ENCODE measurements at regions of chr18 and their contacts with region 1.

Region 1: DNA sequence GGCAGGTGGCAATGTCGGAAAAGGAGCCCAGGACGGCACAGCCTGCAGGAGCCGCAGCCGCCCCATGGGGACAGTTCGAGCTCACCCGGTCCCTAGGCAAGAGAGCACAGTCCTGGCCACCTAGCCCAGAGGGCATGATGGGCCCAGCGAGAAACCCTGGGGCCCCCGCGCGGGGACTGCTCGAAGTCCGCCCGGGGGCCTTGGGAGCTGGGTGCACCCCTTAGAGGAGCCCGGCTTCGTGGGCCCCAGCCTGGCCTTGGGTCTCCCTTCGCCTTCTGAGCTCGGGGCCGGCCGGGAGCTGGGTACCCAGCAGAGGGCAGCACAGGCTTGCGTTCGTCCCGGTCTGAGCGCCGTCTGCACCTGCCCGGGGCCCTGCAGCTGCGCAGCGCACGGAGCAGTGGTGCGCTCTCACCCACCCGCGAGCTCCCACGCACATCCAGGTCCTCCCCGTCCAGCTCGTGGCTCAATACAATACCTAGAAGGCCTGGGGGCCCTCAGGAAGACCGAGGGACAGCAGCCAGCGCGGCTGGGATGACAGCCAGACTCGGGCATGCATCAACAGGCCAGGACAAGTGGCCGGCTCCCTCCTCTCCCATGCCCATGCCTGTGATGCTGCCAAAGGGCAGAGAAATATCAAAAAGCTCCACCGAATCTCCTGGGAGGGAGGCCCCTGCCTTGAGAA is 96.2 kb upstream of the ZNF532 start:
- DNase-seq: peak; percentile 53 to 73
- H3K4me3 ChIP-seq: no peak overlapping the region
- H3K4me3 Mint-ChIP-seq: peak overlapping the region; percentile 62
- H3K27ac Mint-ChIP-seq: no peak overlapping the region
- H3K4me1 ChIP-seq: no peaks in the 10 kb centered on the region
- H3K4me1 Mint-ChIP-seq: no peaks in the 10 kb centered on the region
- H3K27me3 ChIP-seq: no peaks in the 10 kb centered on the region
- H3K27me3 Mint-ChIP-seq: peaks cover 7% of the 10 kb centered on the region
- CTCF ChIP-seq: peak; percentile 35 to 71

Region 2: GRCh38 chr18:58400337-58400870 is 368.0 kb before region 1 on chr18:
- CTCF ChIA-PET with region 1: no interaction called
- POLR2A ChIA-PET with region 1: no interaction called
- intact Hi-C with region 1: loop called (anchors 1 kb)
- DNase-seq: no peak
- H3K4me3 ChIP-seq: no peak overlapping the region
- H3K4me3 Mint-ChIP-seq: no peak overlapping the region
- H3K27ac Mint-ChIP-seq: no peak overlapping the region
- H3K4me1 ChIP-seq: no peaks in the 10 kb centered on the region
- H3K4me1 Mint-ChIP-seq: no peaks in the 10 kb centered on the region
- H3K27me3 ChIP-seq: no peaks in the 10 kb centered on the region
- H3K27me3 Mint-ChIP-seq: no peaks in the 10 kb centered on the region
- CTCF ChIP-seq: no peak

Region 3: DNA sequence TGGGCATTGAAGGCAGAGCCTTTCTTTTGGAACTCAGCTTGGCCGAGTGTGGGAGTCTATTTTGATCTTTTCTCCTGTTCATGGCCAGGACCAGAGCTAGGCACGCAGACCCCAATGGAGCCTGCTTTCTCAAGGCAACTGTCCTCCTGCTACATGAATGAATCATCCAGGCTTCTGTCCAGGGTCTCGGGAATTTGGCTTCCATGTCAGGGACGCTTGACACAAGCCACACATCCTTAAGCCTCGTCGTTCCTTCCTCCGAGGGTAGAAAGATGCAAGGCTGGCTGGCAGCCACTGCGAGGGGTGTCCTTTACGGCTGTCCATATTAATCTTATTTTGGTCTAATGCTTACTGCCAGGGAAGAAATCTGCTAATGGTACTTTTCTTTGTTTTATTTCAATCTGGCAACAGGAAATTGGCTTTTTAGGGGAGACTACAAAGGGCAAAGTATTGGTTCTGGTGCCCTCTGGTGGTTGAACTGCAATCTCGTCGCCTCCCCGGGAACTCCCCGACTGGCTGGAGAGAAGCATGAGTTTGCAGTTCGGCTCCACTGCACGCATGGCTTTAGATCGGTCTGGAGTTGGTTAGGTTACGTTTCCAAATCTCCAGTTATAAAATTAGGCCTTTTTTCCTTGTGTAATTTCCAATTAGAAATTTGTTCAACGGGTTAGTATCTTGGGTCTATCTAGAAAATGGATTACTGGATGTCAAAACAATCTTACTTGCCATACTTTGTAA is 274.7 kb before region 1 on chr18:
- CTCF ChIA-PET with region 1: interaction called, 4 read pairs
- POLR2A ChIA-PET with region 1: no interaction called
- intact Hi-C with region 1: loop called (anchors 2 kb)
- DNase-seq: peak; percentile 49 to 64
- H3K4me3 ChIP-seq: no peak overlapping the region
- H3K4me3 Mint-ChIP-seq: no peak overlapping the region
- H3K27ac Mint-ChIP-seq: no peak overlapping the region
- H3K4me1 ChIP-seq: no peaks in the 10 kb centered on the region
- H3K4me1 Mint-ChIP-seq: peaks cover 7% of the 10 kb centered on the region
- H3K27me3 ChIP-seq: no peaks in the 10 kb centered on the region
- H3K27me3 Mint-ChIP-seq: no peaks in the 10 kb centered on the region
- CTCF ChIP-seq: peak; percentile 51 to 61

Region 4: GRCh38 chr18:58884680-58885079 is 116.2 kb after region 1 on chr18:
- CTCF ChIA-PET with region 1: no interaction called
- POLR2A ChIA-PET with region 1: no interaction called
- intact Hi-C with region 1: no loop called
- DNase-seq: no peak
- H3K4me3 ChIP-seq: no peak overlapping the region
- H3K4me3 Mint-ChIP-seq: no peak overlapping the region
- H3K27ac Mint-ChIP-seq: no peak overlapping the region
- H3K4me1 ChIP-seq: no peaks in the 10 kb centered on the region
- H3K4me1 Mint-ChIP-seq: no peaks in the 10 kb centered on the region
- H3K27me3 ChIP-seq: no peaks in the 10 kb centered on the region
- H3K27me3 Mint-ChIP-seq: no peaks in the 10 kb centered on the region
- CTCF ChIP-seq: no peak

Region 5: DNA sequence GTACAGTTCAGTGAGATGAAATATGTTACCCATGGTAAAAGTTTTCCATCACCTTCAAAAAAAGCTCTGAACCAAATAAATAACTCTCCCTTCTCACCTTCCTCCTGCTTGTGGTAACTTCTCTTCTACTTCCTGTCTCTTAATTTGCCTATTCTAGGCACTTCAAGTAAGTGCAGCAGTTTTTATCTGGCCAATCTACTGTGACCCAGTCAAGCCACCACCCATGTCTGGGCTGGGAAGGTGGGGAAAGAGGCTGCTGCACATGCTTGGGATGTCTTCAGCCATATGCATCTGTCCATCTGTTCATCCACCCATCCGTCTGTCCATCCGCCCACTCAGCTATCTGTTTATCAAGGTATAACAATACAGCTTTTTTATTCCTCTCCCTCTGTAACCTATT is 127.8 kb after region 1 on chr18:
- CTCF ChIA-PET with region 1: no interaction called
- POLR2A ChIA-PET with region 1: no interaction called
- intact Hi-C with region 1: no loop called
- DNase-seq: no peak
- H3K4me3 ChIP-seq: no peak overlapping the region
- H3K4me3 Mint-ChIP-seq: no peak overlapping the region
- H3K27ac Mint-ChIP-seq: no peak overlapping the region
- H3K4me1 ChIP-seq: no peaks in the 10 kb centered on the region
- H3K4me1 Mint-ChIP-seq: peaks cover 7% of the 10 kb centered on the region
- H3K27me3 ChIP-seq: no peaks in the 10 kb centered on the region
- H3K27me3 Mint-ChIP-seq: no peaks in the 10 kb centered on the region
- CTCF ChIP-seq: no peak

Region 6: GRCh38 chr18:58928386-58928785 is 160.0 kb after region 1 on chr18:
- CTCF ChIA-PET with region 1: no interaction called
- POLR2A ChIA-PET with region 1: no interaction called
- intact Hi-C with region 1: no loop called
- DNase-seq: no peak
- H3K4me3 ChIP-seq: no peak overlapping the region
- H3K4me3 Mint-ChIP-seq: no peak overlapping the region
- H3K27ac Mint-ChIP-seq: no peak overlapping the region
- H3K4me1 ChIP-seq: no peaks in the 10 kb centered on the region
- H3K4me1 Mint-ChIP-seq: no peaks in the 10 kb centered on the region
- H3K27me3 ChIP-seq: no peaks in the 10 kb centered on the region
- H3K27me3 Mint-ChIP-seq: no peaks in the 10 kb centered on the region
- CTCF ChIP-seq: no peak

Region 7: GRCh38 chr18:59070181-59070912 is 301.9 kb after region 1 on chr18:
- CTCF ChIA-PET with region 1: interaction called, 24 read pairs
- POLR2A ChIA-PET with region 1: no interaction called
- intact Hi-C with region 1: loop called (anchors 1 kb)
- DNase-seq: peak; percentile 68 to 79
- H3K4me3 ChIP-seq: no peak overlapping the region
- H3K4me3 Mint-ChIP-seq: no peak overlapping the region
- H3K27ac Mint-ChIP-seq: no peak overlapping the region
- H3K4me1 ChIP-seq: no peaks in the 10 kb centered on the region
- H3K4me1 Mint-ChIP-seq: peaks cover 8% of the 10 kb centered on the region
- H3K27me3 ChIP-seq: no peaks in the 10 kb centered on the region
- H3K27me3 Mint-ChIP-seq: no peaks in the 10 kb centered on the region
- CTCF ChIP-seq: peak; percentile 67 to 70

Region 8: DNA sequence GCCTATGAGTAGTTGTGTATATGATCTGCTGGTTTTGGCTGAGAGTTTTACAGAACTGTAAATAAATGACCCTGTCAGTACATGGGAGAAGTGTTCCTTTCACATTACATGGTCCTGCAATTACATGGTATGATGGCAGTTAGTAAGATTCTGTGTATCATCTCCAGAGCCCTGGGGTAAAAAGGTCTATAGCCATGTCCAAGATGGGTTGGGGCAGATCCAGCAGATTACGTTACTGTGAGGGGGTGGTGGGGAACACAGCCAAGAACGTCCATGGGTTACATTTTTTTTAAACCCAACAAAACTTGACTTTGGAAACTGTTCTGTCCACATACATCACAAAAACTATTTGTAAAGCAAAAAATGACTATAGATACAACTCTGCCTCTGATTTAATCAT is 654.8 kb after region 1 on chr18:
- CTCF ChIA-PET with region 1: no interaction called
- POLR2A ChIA-PET with region 1: no interaction called
- intact Hi-C with region 1: no loop called
- DNase-seq: no peak
- H3K4me3 ChIP-seq: no peak overlapping the region
- H3K4me3 Mint-ChIP-seq: no peak overlapping the region
- H3K27ac Mint-ChIP-seq: no peak overlapping the region
- H3K4me1 ChIP-seq: no peaks in the 10 kb centered on the region
- H3K4me1 Mint-ChIP-seq: no peaks in the 10 kb centered on the region
- H3K27me3 ChIP-seq: no peaks in the 10 kb centered on the region
- H3K27me3 Mint-ChIP-seq: no peaks in the 10 kb centered on the region
- CTCF ChIP-seq: no peak

Measured in Caco-2 (cell line).